ENCODE measurements at regions of chr22 and their contacts with region 1.

Region 1: DNA sequence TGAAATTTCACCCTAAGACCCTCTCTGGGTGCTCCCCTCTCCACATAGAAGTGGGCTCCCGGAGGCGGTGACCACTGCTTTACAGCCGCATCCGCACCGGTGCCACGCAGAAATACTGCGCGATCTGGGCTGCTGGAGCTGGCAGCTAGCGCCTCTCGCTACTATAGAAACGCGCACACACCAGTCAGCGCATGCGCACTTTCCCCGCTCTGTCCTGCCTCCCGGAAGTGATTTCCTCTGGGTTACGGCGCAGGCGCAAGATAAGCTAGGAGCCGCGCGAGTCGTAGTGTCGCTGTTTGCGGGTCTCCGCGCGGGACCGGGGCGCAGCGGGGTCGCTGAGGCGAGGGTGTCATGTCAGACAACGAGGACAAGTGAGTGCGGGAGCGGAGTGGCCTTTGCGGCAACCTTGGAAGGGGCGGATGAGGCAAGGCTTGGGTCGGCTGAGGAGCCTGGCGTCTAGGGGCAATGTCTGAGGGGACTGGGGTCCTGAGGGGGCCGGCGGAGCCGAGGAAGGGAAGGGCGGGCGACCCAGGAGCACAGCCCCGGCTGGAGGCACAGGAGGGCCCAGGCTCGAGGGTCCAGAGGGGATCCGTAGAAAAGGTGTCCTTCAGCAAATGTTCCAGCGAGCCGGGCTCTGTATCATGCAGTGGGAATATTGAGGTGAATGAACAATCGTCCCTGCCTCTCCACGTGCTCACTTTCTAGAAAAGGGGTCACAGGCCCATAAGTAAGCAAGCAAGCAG is at the starts of genes C22orf23 and POLR2F:
- DNase-seq: peak; percentile 100

Region 2: GRCh38 chr22:37972527-37972926 is 18.9 kb after region 1 on chr22:
- CTCF ChIA-PET with region 1: interaction called, 5 read pairs
- POLR2A ChIA-PET with region 1: interaction called, 15 read pairs
- DNase-seq: no peak

Region 3: GRCh38 chr22:38148245-38148644 is 194.6 kb after region 1 on chr22:
- CTCF ChIA-PET with region 1: no interaction called
- POLR2A ChIA-PET with region 1: no interaction called
- DNase-seq: no peak